ENCODE measurements at regions of chr2 and their contacts with region 1.

Region 1: DNA sequence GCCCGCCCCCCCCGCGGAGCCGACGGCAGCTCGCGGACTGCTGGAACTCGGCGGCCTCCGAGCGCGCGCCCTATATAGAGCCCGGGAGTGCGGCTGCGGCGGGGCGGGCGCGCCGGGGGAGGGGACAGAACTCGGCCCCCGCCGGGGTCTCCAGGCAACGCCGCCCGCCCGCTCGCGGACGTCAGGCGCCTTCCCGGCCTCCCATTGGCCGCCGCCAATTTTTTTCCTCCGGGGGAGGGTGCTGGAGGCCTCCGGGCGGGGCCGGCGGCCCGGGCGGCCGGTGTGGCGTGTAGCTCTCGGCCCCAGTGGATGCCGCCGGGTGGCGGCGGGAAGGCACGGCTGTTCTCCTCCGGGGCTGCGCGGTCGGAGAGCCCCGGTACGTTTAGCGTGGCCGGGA is at the start of gene ZFP36L2:
- DNase-seq: peak; percentile 95
- H3K4me3 Mint-ChIP-seq: peak within 1 kb of the TSS; percentile 99
- H3K27ac Mint-ChIP-seq: peak within 1 kb of the TSS; percentile 95
- H3K4me1 Mint-ChIP-seq: peaks cover 29% of the 10 kb centered on the region
- H3K27me3 Mint-ChIP-seq: peaks cover 3% of the 10 kb centered on the region
- total RNA-seq, gene ZFP36L2: 210 to 228 TPM

Region 2: GRCh38 chr2:42947809-42948600 is 278.6 kb before region 1 on chr2:
- CTCF ChIA-PET with region 1: interaction called, 12 read pairs
- POLR2A ChIA-PET with region 1: no interaction called
- DNase-seq: no peak
- H3K4me3 Mint-ChIP-seq: no peak overlapping the region
- H3K27ac Mint-ChIP-seq: no peak overlapping the region
- H3K4me1 Mint-ChIP-seq: peaks cover 4% of the 10 kb centered on the region
- H3K27me3 Mint-ChIP-seq: peaks cover 2% of the 10 kb centered on the region

Region 3: DNA sequence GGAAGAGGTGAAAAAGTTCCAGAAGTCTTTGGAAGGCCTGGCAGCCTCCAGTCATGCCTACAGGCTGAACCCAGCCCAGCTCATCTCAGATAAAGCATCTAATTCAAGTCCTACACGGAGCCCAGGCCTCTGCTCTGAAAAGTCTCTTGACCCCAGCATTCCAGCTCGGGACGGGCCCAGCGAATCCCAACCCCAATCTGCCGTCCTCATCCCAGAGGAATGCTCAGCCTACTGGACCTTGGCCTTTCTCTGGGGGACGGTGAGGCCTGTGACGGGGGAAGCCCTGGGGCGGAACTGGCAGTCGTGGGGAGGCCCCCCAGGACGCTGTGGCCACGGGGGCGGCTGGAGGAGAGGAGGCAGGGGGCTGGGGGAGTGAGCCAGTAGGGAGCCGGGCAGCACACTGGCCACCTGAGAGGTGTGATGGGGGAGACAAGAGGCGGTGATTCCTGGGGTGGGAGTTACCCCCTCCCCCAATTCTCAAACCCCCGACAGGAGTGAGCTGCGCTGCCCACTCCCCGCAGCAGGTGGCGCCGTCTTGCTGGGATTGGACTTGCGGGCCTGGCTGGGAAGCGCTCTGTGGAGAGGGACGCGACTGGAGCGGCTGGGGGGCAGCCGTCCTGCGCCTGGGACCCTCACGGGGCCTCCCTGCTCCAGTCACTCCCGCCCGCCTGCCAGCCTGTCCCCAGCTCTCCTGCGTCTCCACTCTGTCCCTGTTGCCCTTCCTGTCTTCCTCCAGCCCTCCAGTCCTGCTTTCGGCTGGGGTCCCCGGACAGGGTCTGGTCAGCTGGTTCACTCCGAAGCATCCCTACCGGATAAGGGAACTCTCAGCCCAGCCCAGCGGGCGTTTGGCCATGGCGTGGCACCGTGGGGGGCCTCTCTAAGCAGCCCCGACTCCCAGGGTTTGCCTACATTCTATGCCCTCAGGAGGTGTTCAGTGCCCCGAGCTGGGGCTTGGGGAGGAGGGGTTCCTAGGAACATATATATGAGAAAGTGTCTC is 251.5 kb before region 1 on chr2:
- CTCF ChIA-PET with region 1: interaction called, 10 read pairs
- POLR2A ChIA-PET with region 1: interaction called, 5 read pairs
- DNase-seq: peak; percentile 36
- H3K4me3 Mint-ChIP-seq: no peak overlapping the region
- H3K27ac Mint-ChIP-seq: no peak overlapping the region
- H3K4me1 Mint-ChIP-seq: peaks cover 17% of the 10 kb centered on the region
- H3K27me3 Mint-ChIP-seq: no peaks in the 10 kb centered on the region

Region 4: DNA sequence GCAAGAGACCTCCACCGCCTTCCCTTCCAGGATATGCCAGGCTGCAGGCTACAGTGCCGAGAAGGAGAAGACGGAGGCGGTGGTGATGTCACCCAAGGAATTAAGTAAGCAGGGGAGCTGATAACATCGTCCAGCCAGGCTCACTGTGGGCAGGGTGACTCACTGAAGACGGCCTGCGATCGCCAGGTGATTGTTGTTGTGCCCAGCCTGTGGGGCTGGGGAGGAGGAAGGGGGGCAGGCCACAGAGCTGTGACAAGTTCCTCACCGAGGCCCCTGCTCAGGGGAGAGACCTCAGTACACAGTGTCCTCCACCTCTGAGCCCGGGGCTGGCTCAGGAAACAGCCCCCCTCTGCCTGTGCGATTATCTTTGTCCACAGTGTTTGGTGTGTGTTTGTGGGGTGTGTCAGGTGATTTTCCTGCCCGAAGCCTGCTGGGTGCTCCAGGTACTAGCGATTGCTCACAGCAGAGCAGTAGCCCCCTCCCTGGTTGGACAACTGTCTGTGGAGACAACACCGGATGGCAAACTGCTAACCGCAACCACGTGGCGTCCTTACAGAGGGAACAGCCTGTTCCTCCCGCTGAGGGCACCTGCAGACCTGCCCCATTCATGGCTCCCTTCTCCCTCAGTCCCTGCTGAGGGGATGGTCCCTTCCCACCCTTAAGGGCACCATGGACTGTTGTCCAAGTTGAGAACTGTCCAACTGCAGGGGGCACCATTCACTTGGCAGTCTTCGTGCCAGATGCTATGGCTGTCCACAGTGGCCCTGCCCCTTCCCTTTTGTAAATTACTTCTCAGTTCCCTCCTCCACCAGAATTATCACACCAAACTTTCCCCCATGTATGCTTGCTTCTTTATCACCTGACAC is 95.3 kb before region 1 on chr2:
- CTCF ChIA-PET with region 1: interaction called, 525 read pairs
- POLR2A ChIA-PET with region 1: interaction called, 18 read pairs
- DNase-seq: peak; percentile 91
- H3K4me3 Mint-ChIP-seq: peak overlapping the region; percentile 59
- H3K27ac Mint-ChIP-seq: peak overlapping the region; percentile 97
- H3K4me1 Mint-ChIP-seq: peaks cover 93% of the 10 kb centered on the region
- H3K27me3 Mint-ChIP-seq: no peaks in the 10 kb centered on the region

Region 5: GRCh38 chr2:43169987-43170386 is 56.6 kb before region 1 on chr2:
- CTCF ChIA-PET with region 1: interaction called, 13 read pairs
- POLR2A ChIA-PET with region 1: no interaction called
- DNase-seq: peak; percentile 69
- H3K4me3 Mint-ChIP-seq: peak overlapping the region; percentile 12
- H3K27ac Mint-ChIP-seq: peak overlapping the region; percentile 94
- H3K4me1 Mint-ChIP-seq: peaks cover 81% of the 10 kb centered on the region
- H3K27me3 Mint-ChIP-seq: no peaks in the 10 kb centered on the region

Region 6: GRCh38 chr2:43246641-43247040 is 20.1 kb after region 1 on chr2:
- CTCF ChIA-PET with region 1: interaction called, 18 read pairs
- POLR2A ChIA-PET with region 1: no interaction called
- DNase-seq: no peak
- H3K4me3 Mint-ChIP-seq: no peak overlapping the region
- H3K27ac Mint-ChIP-seq: no peak overlapping the region
- H3K4me1 Mint-ChIP-seq: no peaks in the 10 kb centered on the region
- H3K27me3 Mint-ChIP-seq: no peaks in the 10 kb centered on the region